Cardiac septum (tissue), 1 donor: ENCODE measurements at regions of chr13 and their contacts with region 1.

Region 1: DNA sequence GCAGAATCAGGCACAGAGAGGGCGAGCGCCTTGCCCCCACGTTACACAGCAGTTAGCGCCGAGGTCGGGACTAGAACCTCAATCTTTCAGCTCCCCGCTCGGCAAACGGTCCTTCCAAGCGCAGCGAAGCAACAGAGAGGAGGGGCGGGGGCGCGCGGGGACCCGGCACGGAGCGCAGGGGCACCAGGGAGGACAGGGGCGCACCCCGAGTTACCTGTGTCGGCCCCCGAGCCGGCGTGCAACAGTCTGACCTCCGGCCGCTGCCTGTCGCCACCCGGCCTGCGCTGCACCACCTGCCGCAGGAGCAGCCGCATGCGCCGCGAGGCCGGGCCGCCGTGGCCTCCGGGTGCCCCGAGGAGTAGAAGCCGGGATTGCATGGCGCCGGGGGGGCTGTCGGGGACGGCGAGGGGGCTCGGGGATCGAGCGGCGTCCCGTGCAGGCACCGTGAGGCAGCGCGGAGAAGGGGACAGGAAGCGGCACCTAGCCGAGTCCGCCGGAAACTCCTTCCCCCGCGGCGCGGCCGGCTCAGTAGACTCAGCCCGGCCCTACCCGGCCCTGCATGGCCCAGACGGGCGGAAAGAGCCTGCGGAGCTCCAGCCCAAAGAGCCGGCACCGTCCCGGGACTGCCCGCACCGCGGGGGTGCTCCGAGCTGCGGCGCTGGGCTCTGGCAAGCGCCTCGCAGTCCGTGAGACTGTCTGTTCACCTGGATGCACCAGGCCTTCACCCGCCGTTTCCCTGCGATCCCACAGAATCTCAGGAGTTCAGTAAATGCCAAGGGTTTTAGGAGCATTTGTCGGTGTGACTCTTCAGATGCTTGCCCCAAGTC is at the start of gene VWA8:
- DNase-seq: peak; percentile 93
- total RNA-seq, gene VWA8: 49.7 TPM

Region 2: DNA sequence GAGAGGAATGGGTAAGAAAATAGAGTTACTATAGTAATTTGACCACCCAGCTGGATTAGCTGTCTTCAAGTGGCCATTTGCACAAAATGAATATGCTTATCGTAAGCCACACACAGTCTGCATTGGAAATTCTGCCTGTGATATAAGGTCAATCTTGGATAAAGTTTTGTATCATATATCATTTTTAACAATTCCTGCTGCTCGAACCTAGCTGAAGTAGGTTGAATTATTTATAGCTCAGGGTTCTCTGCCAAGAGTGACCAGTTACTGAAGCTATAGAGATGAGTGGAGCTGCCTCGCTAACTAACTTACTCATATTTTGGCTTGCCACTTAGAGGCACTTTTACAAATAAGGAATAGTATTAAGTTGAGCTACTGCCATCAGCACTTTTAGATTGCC is 282.6 kb before region 1 on chr13:
- intact Hi-C with region 1: loop called (anchors 10 kb)
- DNase-seq: no peak

Region 3: GRCh38 chr13:42039946-42040729 is 79.3 kb after region 1 on chr13:
- intact Hi-C with region 1: loop called (anchors 1 kb)
- DNase-seq: peak; percentile 93